Activated naive CD4-positive, alpha-beta T cell treated with anti-CD3 and anti-CD28 coated beads, Interleukin-2, amount 10 ng/mL, durations not matched to agents 7 days and 5 days (primary cell): ENCODE measurements at regions of chr20 and their contacts with region 1.

Region 1: GRCh38 chr20:35463455-35464300 is 8.3 kb downstream of the CEP250 start:
- DNase-seq: peak; percentile 70
- H3K4me3 Mint-ChIP-seq: no peak overlapping the region
- H3K27ac Mint-ChIP-seq: no peak overlapping the region
- H3K4me1 Mint-ChIP-seq: no peaks in the 10 kb centered on the region
- H3K27me3 Mint-ChIP-seq: no peaks in the 10 kb centered on the region

Region 2: DNA sequence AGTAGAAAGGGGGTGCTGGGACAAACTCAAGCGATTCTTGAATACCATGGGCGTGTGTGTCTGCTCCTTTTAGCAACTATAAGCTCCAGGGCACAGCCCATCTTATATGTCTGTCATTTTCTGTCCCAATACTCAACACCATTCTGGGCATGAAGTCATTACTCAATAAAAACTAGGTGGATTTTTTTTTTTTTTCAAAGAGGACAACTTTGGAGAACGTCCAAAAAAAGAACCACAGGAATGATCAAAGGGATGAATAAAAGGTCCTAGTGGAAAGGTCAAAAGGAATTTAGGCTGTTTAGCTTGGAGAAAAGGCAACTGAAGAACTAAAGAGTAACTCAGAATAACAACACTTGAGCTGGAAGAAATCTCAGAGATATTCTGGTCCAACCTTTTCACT is 76.3 kb before region 1 on chr20:
- CTCF ChIA-PET with region 1: no interaction called
- DNase-seq: no peak
- H3K4me3 Mint-ChIP-seq: no peak overlapping the region
- H3K27ac Mint-ChIP-seq: no peak overlapping the region
- H3K4me1 Mint-ChIP-seq: peaks cover 11% of the 10 kb centered on the region
- H3K27me3 Mint-ChIP-seq: no peaks in the 10 kb centered on the region

Region 3: GRCh38 chr20:35474303-35474871 is 10.7 kb after region 1 on chr20:
- CTCF ChIA-PET with region 1: interaction called, 11 read pairs
- DNase-seq: no peak
- H3K4me3 Mint-ChIP-seq: no peak overlapping the region
- H3K27ac Mint-ChIP-seq: no peak overlapping the region
- H3K4me1 Mint-ChIP-seq: no peaks in the 10 kb centered on the region
- H3K27me3 Mint-ChIP-seq: no peaks in the 10 kb centered on the region

Region 4: DNA sequence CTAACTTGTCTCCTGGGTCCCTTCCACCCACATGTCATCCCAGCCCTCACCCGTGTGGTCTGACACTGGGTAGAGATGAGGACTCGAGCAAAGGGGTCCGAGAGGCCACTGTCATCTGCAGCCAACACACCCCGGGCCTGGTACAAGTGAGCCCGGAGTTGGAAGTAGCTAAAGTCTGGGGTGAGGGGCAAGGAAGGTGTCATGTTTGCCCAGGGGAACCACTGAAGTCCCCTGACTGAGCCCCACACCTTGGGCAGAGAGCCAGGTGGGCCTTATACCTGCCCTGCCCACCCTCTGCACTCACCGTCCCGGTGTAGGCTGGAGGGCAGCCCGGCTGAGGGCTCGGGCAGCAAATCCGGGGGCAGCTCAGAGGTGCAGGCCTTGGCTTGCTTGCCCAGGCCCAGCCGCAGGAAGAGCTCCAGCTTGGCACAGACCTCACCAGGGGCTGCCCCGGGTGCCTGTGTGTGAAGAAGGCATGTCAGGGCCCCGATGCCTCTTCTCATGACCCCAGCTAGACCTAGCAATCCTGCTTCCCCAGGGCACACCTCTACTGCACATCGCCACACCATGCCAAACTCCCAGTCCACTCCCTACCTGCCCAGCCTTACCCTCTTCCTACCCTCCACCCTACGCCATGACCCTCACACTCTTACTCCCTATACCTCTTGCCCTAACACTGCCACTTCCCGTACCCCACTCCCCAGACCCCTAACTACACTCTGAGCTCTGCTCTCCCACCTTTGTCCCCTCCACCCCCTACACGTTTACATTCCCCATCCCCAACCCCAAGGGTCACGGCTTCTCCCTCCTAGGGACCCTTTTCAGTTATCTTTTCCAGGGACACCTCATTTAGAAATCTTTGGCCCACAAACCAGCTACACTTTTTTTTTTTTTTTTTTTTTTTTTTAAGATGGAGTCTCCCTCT is 120.2 kb after region 1 on chr20:
- CTCF ChIA-PET with region 1: no interaction called
- DNase-seq: no peak
- H3K4me3 Mint-ChIP-seq: no peak overlapping the region
- H3K27ac Mint-ChIP-seq: no peak overlapping the region
- H3K4me1 Mint-ChIP-seq: no peaks in the 10 kb centered on the region
- H3K27me3 Mint-ChIP-seq: peaks cover 20% of the 10 kb centered on the region

Region 5: GRCh38 chr20:35680452-35681183 is 216.9 kb after region 1 on chr20:
- CTCF ChIA-PET with region 1: no interaction called
- DNase-seq: no peak
- H3K4me3 Mint-ChIP-seq: no peak overlapping the region
- H3K27ac Mint-ChIP-seq: no peak overlapping the region
- H3K4me1 Mint-ChIP-seq: no peaks in the 10 kb centered on the region
- H3K27me3 Mint-ChIP-seq: no peaks in the 10 kb centered on the region